GM12878 (cell line): ENCODE measurements at regions of chr14 and their contacts with region 1.

Region 1: DNA sequence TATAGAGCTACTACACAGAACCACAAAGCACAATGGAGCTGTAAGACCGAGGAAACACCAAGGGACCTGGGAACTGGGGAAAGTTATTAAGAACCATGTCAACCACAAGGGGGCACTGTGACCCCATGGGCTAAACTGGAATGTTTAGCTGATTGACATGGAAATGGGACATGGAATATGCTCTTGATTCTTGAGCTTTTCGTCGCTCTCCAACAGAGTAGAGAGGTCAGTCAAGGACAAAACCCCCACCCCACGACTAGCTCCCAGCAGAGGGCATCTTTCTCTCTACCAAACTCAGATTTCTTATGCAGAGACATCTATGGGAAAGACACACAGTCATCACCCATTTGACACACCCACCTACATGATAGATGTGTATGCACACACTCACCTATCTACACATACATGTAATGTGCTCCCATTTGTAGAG is 10.1 kb downstream of the NDRG2 start:
- DNase-seq: peak; percentile 25
- ATAC-seq: peak; percentile 91
- H3K4me3 ChIP-seq: no peak overlapping the region
- H3K27ac ChIP-seq: no peak overlapping the region
- H3K4me1 ChIP-seq: no peaks in the 10 kb centered on the region
- H3K27me3 ChIP-seq: peaks cover 0 to 5% of the 10 kb centered on the region in 2 experiments; a peak in 2 of 4 replicates
- CTCF ChIP-seq: peak; percentile 79 to 93 (median 88); a peak in 5 of 6 replicates
- EP300 ChIP-seq: no peak
- POLR2A ChIP-seq: no peak
- RAD21 ChIP-seq: peak; percentile 94

Region 2: DNA sequence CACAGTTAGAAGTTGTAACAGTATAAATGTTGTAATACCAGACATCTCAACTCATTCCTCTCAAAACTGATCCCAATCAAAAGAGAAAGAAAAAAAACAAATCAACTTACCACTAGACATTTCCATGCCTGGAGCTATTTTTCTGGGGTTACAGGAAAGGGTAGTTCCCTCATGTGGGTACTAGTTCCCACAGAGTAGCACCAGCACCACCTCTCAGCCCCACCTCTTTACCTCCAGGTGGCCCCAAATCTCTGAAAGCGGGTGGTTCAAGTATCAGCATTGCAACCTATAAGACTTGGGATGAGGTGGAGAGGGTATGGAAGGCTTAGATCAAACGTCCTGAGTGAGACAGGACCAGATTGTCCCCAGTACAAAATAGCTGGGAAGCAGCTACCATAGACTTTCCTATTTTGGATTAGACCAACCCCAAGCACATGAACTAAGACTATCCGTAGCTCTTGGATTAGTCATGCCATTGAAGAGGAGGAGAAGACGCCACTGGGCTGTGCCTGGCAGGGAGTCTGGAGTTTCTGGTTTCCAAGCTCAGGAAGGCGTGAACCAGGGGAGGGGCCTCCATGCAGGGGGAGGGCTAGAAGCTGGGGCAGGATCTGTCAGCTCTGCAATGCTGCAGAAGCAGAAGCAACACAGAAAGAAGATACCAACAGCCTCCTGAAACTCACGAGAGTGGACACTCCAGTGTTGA is 16.0 kb before region 1 on chr14 and contains the start of gene SLC39A2:
- CTCF ChIA-PET with region 1: interaction called, 62 read pairs
- POLR2A ChIA-PET with region 1: no interaction called
- RAD21 ChIA-PET with region 1: interaction called, 11 read pairs
- SMC1A ChIA-PET with region 1: interaction called, 5 read pairs
- in situ Hi-C with region 1: no loop called
- intact Hi-C with region 1: no loop called
- DNase-seq: no peak
- ATAC-seq: no peak
- H3K4me3 ChIP-seq: no peak within 1 kb of the TSS
- H3K27ac ChIP-seq: no peak within 1 kb of the TSS
- H3K4me1 ChIP-seq: no peaks in the 10 kb centered on the region
- H3K27me3 ChIP-seq: no peaks in the 10 kb centered on the region
- CTCF ChIP-seq: no peak
- EP300 ChIP-seq: no peak
- POLR2A ChIP-seq: no peak
- RAD21 ChIP-seq: no peak
- polyA plus RNA-seq, gene SLC39A2: not detected

Region 3: DNA sequence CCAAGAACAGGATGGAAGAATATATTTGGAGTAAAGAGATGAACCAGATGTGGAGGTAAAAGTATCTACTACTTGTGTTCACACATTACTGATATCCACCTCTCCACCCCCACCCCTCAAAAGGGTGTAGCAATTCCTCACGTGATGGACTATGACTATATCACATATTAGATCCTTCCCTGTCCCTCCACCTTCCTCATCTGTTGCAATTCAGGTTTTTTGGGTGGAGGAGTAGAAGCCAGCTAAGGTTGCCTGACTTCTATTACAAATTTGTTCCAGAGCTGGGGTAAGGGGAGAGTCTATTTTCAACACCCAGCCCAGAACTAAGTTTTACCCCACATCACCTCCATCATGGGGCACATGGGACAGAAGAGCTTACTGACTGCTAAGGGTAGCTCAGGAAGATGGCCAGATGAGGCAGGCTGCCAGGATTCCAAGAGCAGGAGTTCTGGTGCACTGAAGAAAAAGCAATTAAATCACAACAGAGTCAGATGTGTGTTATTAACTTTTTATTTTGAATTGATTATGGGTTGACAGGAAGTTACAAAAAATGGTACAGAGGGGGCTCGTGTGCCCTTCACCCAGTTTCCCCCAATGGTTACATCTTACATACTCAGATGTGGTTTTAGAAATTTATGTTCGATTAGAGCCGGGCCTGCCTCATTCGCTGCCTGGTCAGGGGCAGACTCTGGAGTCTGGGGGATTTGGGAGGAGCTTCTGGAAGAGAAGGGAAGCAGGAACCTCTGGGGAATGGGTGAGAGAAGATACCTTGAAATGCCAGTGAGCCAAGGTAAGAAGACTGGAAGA is 17.8 kb after region 1 on chr14:
- CTCF ChIA-PET with region 1: interaction called, 14 read pairs
- POLR2A ChIA-PET with region 1: interaction called, 9 read pairs
- RAD21 ChIA-PET with region 1: interaction called, 5 read pairs
- SMC1A ChIA-PET with region 1: interaction called, 3 read pairs
- in situ Hi-C with region 1: no loop called
- intact Hi-C with region 1: no loop called
- DNase-seq: no peak
- ATAC-seq: no peak
- H3K4me3 ChIP-seq: no peak overlapping the region
- H3K27ac ChIP-seq: no peak overlapping the region
- H3K4me1 ChIP-seq: peaks cover 8% of the 10 kb centered on the region
- H3K27me3 ChIP-seq: peaks cover 0 to 9% of the 10 kb centered on the region in 2 experiments; a peak in 2 of 4 replicates
- CTCF ChIP-seq: no peak
- EP300 ChIP-seq: no peak
- POLR2A ChIP-seq: no peak
- RAD21 ChIP-seq: no peak

Region 4: DNA sequence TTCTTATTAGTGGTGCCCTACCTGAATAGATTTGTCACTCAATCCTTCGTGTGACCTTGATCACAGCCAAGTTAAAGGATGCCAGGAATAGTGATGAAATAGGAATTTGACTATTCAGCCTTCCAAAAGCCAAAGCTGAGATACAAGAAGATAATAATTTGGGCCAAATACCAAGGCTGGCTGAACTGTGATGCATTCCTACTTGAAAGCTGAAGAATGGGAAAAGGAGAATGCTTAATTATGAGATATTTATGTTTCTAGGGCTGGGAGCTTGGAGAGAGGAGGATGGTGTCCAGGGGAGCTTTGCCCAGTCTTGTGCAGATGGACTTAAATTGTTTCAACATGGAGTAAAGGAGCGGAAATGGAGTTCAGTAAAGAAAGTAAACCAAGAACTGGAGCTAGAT is 32.6 kb after region 1 on chr14:
- CTCF ChIA-PET with region 1: interaction called, 57 read pairs
- POLR2A ChIA-PET with region 1: interaction called, 4 read pairs
- RAD21 ChIA-PET with region 1: interaction called, 3 read pairs
- SMC1A ChIA-PET with region 1: interaction called, 17 read pairs
- in situ Hi-C with region 1: no loop called
- intact Hi-C with region 1: no loop called
- DNase-seq: no peak
- ATAC-seq: no peak
- H3K4me3 ChIP-seq: no peak overlapping the region
- H3K27ac ChIP-seq: no peak overlapping the region
- H3K4me1 ChIP-seq: no peaks in the 10 kb centered on the region
- H3K27me3 ChIP-seq: peaks cover 0 to 11% of the 10 kb centered on the region in 2 experiments; a peak in 2 of 4 replicates
- CTCF ChIP-seq: no peak
- EP300 ChIP-seq: no peak
- POLR2A ChIP-seq: no peak
- RAD21 ChIP-seq: no peak

Region 5: DNA sequence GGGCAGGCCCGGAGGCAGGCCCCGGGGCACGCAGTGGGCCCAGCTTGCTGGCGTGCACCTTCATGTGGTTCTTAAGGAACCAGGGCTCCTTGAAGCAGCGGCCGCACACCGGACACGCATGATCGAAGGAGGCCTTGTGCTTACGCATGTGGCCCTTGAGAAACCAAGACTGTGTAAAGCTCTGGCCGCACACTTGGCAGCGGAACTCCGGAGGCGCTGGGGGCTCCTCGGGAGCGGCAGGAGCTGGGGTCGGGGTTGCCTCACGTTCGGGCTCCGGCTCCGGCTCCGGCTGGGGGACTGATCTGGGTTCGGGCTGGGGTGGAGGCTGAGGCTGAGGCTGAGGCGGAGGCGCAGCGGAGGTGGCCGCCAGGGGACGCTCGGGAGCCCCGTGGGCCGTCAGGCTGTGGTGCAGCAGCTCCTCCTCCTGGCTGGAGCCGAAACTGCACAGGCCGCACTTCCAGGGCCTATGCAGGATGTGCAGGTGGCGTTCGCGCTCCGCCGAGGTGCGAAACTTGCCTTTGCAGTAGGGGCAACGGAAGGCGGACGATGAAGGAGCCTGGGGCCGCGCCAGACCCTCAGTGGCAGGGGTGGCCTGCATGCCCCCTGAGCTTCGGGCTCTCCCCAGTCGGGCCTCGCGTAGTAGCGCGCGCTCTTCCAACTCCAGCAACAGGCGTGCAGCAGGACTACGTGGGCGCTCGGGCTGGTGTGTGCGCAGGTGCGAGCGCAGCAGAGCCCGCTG is 77.7 kb after region 1 on chr14:
- CTCF ChIA-PET with region 1: interaction called, 102 read pairs
- POLR2A ChIA-PET with region 1: interaction called, 9 read pairs
- RAD21 ChIA-PET with region 1: interaction called, 36 read pairs
- SMC1A ChIA-PET with region 1: interaction called, 28 read pairs
- in situ Hi-C with region 1: no loop called
- intact Hi-C with region 1: loop called (anchors 1 kb)
- DNase-seq: no peak
- ATAC-seq: peak; percentile 92
- H3K4me3 ChIP-seq: no peak overlapping the region
- H3K27ac ChIP-seq: no peak overlapping the region
- H3K4me1 ChIP-seq: no peaks in the 10 kb centered on the region
- H3K27me3 ChIP-seq: peaks cover 0 to 3% of the 10 kb centered on the region in 2 experiments; a peak in 2 of 4 replicates
- CTCF ChIP-seq: peak; percentile 100; a peak in 5 of 6 replicates
- EP300 ChIP-seq: no peak
- POLR2A ChIP-seq: no peak
- RAD21 ChIP-seq: peak; percentile 91

Region 6: GRCh38 chr14:21233457-21234076 is 218.8 kb after region 1 on chr14:
- CTCF ChIA-PET with region 1: no interaction called
- POLR2A ChIA-PET with region 1: no interaction called
- RAD21 ChIA-PET with region 1: no interaction called
- SMC1A ChIA-PET with region 1: no interaction called
- in situ Hi-C with region 1: no loop called
- intact Hi-C with region 1: no loop called
- DNase-seq: no peak
- ATAC-seq: peak; percentile 57
- H3K4me3 ChIP-seq: no peak overlapping the region
- H3K27ac ChIP-seq: no peak overlapping the region
- H3K4me1 ChIP-seq: peaks cover 9% of the 10 kb centered on the region; the same call in 1 of the 2 replicates
- H3K27me3 ChIP-seq: no peaks in the 10 kb centered on the region
- CTCF ChIP-seq: peak in 2 of 3 experiments; percentile 13 to 24; a peak in 1 of 6 replicates
- EP300 ChIP-seq: no peak
- POLR2A ChIP-seq: no peak
- RAD21 ChIP-seq: 0 out of 2 replicates have a peak, but pooled peaks have one; percentile 21